Activated CD8-positive, alpha-beta T cell treated with anti-CD3 and anti-CD28 coated beads, Interleukin-2, amount 10 ng/mL, durations not matched to agents 7 days and 5 days (primary cell): ENCODE measurements at regions of chr9 and their contacts with region 1.

Region 1: GRCh38 chr9:99231711-99232110 is 9.6 kb downstream of the SEC61B start:
- DNase-seq: peak; percentile 61
- ATAC-seq: peak; percentile 71
- H3K4me3 Mint-ChIP-seq: no peak overlapping the region
- H3K27ac Mint-ChIP-seq: no peak overlapping the region
- H3K4me1 Mint-ChIP-seq: peaks cover 11% of the 10 kb centered on the region
- H3K27me3 Mint-ChIP-seq: no peaks in the 10 kb centered on the region

Region 2: DNA sequence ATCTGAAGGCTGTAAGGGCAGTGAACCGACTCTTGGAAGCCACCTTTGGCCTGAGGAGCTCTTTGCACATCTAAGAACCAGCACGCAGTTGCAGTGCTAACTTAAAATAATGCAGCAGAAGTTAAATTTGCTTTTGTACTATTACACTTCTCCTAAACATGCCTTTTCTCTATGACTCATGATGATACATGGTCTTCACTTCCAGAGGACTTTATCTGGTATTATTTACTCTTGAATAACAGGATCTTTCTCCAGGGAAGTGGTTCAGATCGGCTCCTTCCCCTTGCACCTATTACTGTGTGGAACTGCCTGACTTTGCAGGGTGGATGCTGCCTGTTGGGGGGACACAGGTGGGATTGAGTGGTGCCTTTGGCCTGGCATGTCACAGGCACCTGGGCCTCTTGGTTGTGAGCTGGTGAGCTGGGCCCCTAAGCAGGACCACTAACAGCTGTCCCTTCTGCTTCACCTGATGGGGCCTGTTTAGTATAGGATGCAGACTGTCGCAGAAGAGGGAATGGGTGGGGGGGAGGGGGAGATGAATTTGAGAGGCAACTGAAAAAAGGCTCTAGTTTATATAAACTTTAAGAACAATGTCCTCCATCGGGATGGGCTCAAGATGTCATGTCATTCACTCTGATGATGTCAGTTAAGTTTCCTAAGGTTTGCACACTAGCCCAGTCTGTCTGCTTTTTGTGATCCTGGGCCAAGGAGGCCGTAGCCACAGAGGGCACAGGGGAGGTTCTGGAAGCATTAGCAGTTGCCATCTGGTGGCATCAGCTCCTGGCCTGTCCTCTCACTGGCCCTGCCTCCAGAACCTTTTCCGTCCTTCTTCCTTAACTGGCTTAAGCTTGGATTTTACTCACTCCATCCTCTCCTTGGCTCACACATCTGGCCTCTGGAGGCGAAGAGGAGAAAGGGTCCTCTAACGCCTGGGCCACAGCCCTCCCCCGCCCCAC is 489.1 kb before region 1 on chr9:
- CTCF ChIA-PET with region 1: no interaction called
- POLR2A ChIA-PET with region 1: no interaction called
- DNase-seq: no peak
- ATAC-seq: no peak
- H3K4me3 Mint-ChIP-seq: no peak overlapping the region
- H3K27ac Mint-ChIP-seq: no peak overlapping the region
- H3K4me1 Mint-ChIP-seq: no peaks in the 10 kb centered on the region
- H3K27me3 Mint-ChIP-seq: no peaks in the 10 kb centered on the region

Region 3: DNA sequence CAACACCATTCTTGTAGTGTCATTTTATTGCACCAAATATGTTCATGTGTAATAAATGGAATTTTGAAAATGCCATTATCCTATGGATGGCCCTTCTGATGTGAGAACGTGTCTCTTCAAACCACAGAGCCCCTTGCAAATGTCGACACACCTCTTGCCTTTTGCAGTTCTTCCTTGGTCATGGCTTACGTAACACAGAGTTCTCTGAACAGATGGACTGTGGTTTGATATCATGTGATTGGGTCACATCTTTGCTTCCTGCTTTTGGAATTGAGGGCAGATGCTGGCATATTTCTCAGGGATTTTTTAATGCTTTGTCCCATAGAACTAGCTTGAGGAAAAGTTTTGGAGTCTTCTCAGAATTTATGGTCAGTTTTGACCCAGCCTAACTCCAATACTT is 122.2 kb before region 1 on chr9:
- CTCF ChIA-PET with region 1: no interaction called
- POLR2A ChIA-PET with region 1: no interaction called
- DNase-seq: no peak
- ATAC-seq: no peak
- H3K4me3 Mint-ChIP-seq: no peak overlapping the region
- H3K27ac Mint-ChIP-seq: no peak overlapping the region
- H3K4me1 Mint-ChIP-seq: peaks cover 77% of the 10 kb centered on the region
- H3K27me3 Mint-ChIP-seq: no peaks in the 10 kb centered on the region

Region 4: DNA sequence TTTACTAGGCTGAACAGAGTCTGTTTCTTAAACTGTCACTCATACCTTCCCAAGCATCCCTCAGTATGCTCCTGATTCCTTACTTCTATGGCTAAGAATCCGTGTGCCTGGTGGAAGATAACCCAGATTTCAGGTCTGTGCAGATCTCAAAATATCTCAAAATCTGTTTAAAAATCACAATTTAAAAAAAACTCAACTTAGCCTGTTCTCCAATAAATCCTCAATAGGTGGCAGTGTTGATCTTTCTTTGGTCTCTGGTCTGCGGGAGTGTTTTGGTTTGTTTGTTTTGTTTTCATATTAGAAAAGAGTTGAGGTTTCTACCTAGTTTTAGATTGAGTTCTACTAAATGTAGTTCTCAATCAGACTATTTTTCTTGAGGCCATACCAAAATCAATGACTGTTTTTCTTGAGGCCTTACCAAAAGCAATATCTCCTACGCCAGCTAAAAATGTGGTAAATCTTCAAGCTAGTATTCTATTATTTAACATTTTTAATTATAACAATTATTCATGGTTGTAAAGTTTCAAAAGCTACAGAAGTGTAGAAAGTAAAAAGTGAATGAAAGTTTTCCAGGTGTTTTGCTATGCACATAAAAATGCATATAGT is 68.8 kb before region 1 on chr9:
- CTCF ChIA-PET with region 1: interaction called, 16 read pairs
- POLR2A ChIA-PET with region 1: no interaction called
- DNase-seq: no peak
- ATAC-seq: no peak
- H3K4me3 Mint-ChIP-seq: no peak overlapping the region
- H3K27ac Mint-ChIP-seq: no peak overlapping the region
- H3K4me1 Mint-ChIP-seq: peaks cover 47% of the 10 kb centered on the region
- H3K27me3 Mint-ChIP-seq: peaks cover 10% of the 10 kb centered on the region

Region 5: GRCh38 chr9:99192786-99193465 is 38.8 kb before region 1 on chr9:
- CTCF ChIA-PET with region 1: interaction called, 17 read pairs
- POLR2A ChIA-PET with region 1: no interaction called
- DNase-seq: no peak
- ATAC-seq: peak; percentile 53
- H3K4me3 Mint-ChIP-seq: no peak overlapping the region
- H3K27ac Mint-ChIP-seq: no peak overlapping the region
- H3K4me1 Mint-ChIP-seq: peaks cover 28% of the 10 kb centered on the region
- H3K27me3 Mint-ChIP-seq: no peaks in the 10 kb centered on the region

Region 6: GRCh38 chr9:99244344-99245260 is 12.9 kb after region 1 on chr9:
- CTCF ChIA-PET with region 1: interaction called, 71 read pairs
- POLR2A ChIA-PET with region 1: interaction called, 4 read pairs
- DNase-seq: no peak
- ATAC-seq: no peak
- H3K4me3 Mint-ChIP-seq: no peak overlapping the region
- H3K27ac Mint-ChIP-seq: no peak overlapping the region
- H3K4me1 Mint-ChIP-seq: peaks cover 14% of the 10 kb centered on the region
- H3K27me3 Mint-ChIP-seq: no peaks in the 10 kb centered on the region

Region 7: GRCh38 chr9:99259231-99259918 is 27.7 kb after region 1 on chr9:
- CTCF ChIA-PET with region 1: interaction called, 23 read pairs
- POLR2A ChIA-PET with region 1: no interaction called
- DNase-seq: peak; percentile 72
- ATAC-seq: peak; percentile 90
- H3K4me3 Mint-ChIP-seq: peak overlapping the region; percentile 44
- H3K27ac Mint-ChIP-seq: peak overlapping the region; percentile 89
- H3K4me1 Mint-ChIP-seq: peaks cover 13% of the 10 kb centered on the region
- H3K27me3 Mint-ChIP-seq: no peaks in the 10 kb centered on the region

Region 8: GRCh38 chr9:99296291-99296951 is 64.7 kb after region 1 on chr9:
- CTCF ChIA-PET with region 1: interaction called, 10 read pairs
- POLR2A ChIA-PET with region 1: no interaction called
- DNase-seq: no peak
- ATAC-seq: peak; percentile 50
- H3K4me3 Mint-ChIP-seq: no peak overlapping the region
- H3K27ac Mint-ChIP-seq: no peak overlapping the region
- H3K4me1 Mint-ChIP-seq: no peaks in the 10 kb centered on the region
- H3K27me3 Mint-ChIP-seq: peaks cover 16% of the 10 kb centered on the region